H1 (cell line): ENCODE measurements at regions of chr6 and their contacts with region 1.

Region 1: GRCh38 chr6:151014404-151015100 is 149.1 kb downstream of the MTHFD1L start:
- DNase-seq: peak; percentile 34 to 80
- H3K4me3 ChIP-seq: no peak overlapping the region
- H3K27ac ChIP-seq: no peak overlapping the region
- H3K4me1 ChIP-seq: peaks cover 0 to 5% (median 1%) of the 10 kb centered on the region in 4 experiments; a peak in 2 of 7 replicates
- H3K27me3 ChIP-seq: no peaks in the 10 kb centered on the region
- CTCF ChIP-seq: peak; percentile 75 to 96 (median 87)
- EP300 ChIP-seq: no peak
- POLR2A ChIP-seq: no peak
- RAD21 ChIP-seq: peak; percentile 93 to 95

Region 2: DNA sequence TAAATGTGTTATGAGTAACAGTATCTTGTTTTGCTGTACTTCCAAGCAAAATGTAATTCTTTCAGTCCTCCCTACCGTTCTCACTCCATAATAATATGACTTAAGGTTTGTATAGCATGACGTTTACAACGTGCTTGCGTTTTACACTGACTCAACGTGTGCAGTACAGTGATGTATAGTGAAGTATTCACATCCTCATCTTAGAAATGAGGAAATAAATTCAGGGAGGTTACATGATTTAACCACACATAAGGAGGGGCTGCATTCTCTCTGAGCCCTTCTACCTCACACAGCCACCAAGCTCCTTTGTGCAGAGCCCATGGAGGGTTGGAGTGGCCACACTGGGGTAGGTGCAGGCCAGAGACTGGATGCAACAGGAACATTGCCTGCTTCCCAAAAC is 15.4 kb after region 1 on chr6:
- CTCF ChIA-PET with region 1: interaction called, 56 read pairs
- POLR2A ChIA-PET with region 1: no interaction called
- DNase-seq: no peak
- H3K4me3 ChIP-seq: no peak overlapping the region
- H3K27ac ChIP-seq: no peak overlapping the region
- H3K4me1 ChIP-seq: no peaks in the 10 kb centered on the region
- H3K27me3 ChIP-seq: no peaks in the 10 kb centered on the region
- CTCF ChIP-seq: no peak
- EP300 ChIP-seq: no peak
- POLR2A ChIP-seq: no peak
- RAD21 ChIP-seq: no peak

Region 3: DNA sequence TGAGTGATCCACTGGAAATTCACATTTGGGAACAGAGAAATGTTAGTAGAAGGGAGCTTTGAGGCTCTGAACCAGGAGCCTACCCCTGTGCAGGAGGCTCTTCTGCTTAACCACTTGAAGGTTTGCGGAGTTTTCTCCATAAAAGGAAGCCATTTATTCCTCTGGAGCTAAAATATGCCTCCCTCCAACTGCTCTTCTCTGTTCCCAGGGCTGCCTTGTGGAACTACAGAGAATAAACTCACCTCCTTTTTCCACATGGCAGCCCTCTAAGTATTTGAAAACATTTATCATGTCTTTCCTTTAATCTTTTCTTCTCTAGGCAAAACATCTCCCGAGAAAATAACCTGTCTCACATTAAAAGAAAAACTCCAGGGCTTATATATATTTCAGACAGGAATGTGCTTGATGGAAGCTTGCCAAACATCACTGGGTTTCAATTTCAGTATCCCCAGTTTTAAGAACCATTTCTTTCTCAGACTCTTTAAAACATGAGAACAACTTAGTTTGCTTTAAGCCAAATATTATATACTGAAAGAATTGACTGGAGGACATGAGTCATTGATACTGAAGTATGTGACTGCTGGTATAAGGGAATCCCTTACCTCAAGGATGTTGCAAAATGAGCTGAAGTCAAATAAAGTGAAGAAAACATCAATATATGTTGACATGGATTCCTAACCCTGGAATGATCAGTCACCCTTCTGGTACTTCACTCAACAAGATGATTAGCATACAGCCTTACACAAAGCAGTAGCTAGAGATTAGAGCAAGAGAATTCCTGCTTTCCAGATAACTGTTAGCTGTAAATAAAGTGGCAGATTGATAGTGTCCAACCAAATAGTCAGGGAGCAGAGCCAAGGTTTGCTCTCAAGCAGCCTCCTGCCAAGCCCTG is 302.8 kb after region 1 on chr6:
- CTCF ChIA-PET with region 1: interaction called, 133 read pairs
- POLR2A ChIA-PET with region 1: no interaction called
- DNase-seq: no peak
- H3K4me3 ChIP-seq: no peak overlapping the region
- H3K27ac ChIP-seq: no peak overlapping the region
- H3K4me1 ChIP-seq: peaks cover 0 to 7% (median 0%) of the 10 kb centered on the region in 4 experiments; a peak in 3 of 7 replicates
- H3K27me3 ChIP-seq: no peaks in the 10 kb centered on the region
- CTCF ChIP-seq: no peak
- EP300 ChIP-seq: no peak
- POLR2A ChIP-seq: no peak
- RAD21 ChIP-seq: no peak

Region 4: DNA sequence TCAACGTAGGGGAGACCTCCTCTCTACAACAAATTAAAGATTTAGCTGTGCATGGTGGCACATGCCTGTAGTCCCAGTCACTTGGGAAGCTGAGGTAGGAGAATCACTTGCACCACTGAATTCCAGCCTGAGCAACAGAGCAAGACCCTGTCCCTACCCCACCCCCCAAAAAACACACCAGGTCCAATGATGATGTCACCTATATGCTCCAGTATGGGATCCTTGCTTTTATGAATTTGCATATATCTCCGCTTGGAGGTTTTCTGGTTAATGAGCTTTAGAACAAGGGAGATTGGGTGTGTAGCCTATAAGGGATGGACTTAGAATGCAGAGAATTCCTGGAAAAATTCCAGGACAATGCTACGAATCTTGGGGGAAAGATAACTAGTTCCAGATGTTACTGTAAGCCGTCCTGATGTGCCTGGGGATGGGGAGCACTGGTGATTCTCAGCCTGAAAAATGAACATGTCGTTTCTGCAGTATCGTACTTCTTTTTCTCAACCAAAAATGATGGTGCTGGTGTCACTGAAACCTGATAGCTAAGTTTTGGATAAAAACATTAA is 315.7 kb after region 1 on chr6:
- CTCF ChIA-PET with region 1: interaction called, 133 read pairs
- POLR2A ChIA-PET with region 1: interaction called, 3 read pairs
- DNase-seq: no peak
- H3K4me3 ChIP-seq: no peak overlapping the region
- H3K27ac ChIP-seq: no peak overlapping the region
- H3K4me1 ChIP-seq: peaks cover 0 to 4% (median 0%) of the 10 kb centered on the region in 4 experiments; a peak in 2 of 7 replicates
- H3K27me3 ChIP-seq: peaks cover 0 to 2% (median under 1%) of the 10 kb centered on the region in 4 experiments; a peak in 2 of 7 replicates
- CTCF ChIP-seq: no peak
- EP300 ChIP-seq: no peak
- POLR2A ChIP-seq: no peak
- RAD21 ChIP-seq: no peak